T-cell (primary cell): ENCODE measurements at regions of chr4 and their contacts with region 1.

Region 1: DNA sequence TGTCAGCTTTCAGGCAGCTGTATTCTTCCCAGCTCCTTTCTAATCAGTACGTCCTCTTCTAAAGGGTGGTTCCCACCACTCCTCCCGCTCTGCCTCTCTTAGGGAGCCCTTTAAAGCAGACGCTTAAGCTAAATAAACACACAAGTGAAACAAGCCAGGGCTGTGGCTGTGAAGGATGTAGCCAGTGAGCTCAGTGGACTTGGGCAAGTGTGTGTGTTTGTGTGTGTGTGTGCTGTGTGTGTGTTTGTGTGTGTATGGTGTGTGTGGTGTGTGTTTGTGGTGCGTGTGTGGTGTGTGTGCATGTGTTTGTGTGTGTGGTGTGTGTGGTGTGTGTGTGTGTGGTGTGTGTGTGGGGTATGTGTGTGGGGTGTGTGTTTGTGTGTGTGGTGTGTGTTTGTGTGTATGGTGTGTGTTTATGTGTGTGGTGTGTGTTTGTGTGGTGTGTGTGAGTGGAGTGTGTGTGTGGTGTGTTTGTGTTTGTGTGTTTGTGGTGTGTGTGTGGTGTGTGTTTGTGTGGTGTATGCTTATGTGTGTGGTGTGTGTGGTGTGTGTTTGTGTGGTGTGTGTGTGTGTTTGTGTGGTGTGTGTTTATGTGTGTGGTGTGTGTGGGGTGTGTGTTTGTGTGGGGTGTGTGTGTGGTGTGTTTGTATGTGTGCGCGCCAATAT is 283.3 kb downstream of the PTTG2 start:
- DNase-seq: no peak
- ATAC-seq: peak in 3 of 4 experiments; percentile 31 to 48 (median 45)
- H3K4me3 ChIP-seq: no peak overlapping the region
- H3K4me3 Mint-ChIP-seq: peak overlapping the region in 1 of 3 donors; percentile 39
- H3K27ac ChIP-seq: no peak overlapping the region
- H3K27ac Mint-ChIP-seq: peak overlapping the region; percentile 49 to 76
- H3K4me1 ChIP-seq: peaks cover 9 to 11% of the 10 kb centered on the region in 2 experiments
- H3K4me1 Mint-ChIP-seq: peaks cover 11 to 21% (median 21%) of the 10 kb centered on the region in 3 donors
- H3K27me3 ChIP-seq: no peaks in the 10 kb centered on the region
- H3K27me3 Mint-ChIP-seq: no peaks in the 10 kb centered on the region

Region 2: DNA sequence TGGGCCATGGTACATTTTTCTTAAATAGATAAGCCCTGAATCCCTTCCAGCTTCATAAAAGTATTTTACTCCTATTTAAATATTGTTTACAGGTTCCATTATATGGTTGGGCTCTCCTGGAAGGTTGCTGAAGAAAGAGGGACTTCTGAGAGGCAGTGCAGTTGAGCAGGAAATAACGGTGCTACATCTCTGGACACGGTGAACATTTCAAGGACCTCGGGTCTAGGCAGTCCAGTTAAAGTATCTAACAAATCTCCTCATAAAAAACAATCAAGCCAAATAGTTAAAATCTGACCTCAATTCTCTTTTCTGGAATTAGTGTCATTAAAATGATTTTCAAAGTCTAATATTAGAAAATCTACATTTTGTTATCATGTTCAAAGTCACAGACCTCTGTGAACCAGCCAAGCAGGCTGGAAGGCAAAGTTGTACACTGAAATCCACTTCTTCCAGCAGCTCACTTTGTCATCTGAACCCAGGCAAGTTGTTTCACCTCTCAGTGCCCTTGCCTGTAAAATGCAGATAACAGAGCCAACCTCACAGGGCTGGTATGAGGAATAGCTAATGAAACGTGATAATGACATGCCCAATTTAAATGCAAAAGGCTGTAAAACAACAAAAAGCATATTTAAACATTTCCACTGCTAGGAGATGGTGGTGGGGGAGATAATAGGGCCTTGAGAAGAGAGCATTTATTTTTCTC is 153.5 kb after region 1 on chr4:
- CTCF ChIA-PET with region 1: no interaction called
- POLR2A ChIA-PET with region 1: no interaction called
- DNase-seq: no peak
- ATAC-seq: no peak
- H3K4me3 ChIP-seq: no peak overlapping the region
- H3K4me3 Mint-ChIP-seq: no peak overlapping the region
- H3K27ac ChIP-seq: no peak overlapping the region
- H3K27ac Mint-ChIP-seq: no peak overlapping the region
- H3K4me1 ChIP-seq: no peaks in the 10 kb centered on the region
- H3K4me1 Mint-ChIP-seq: peaks cover 0 to 9% (median 0%) of the 10 kb centered on the region in 3 donors
- H3K27me3 ChIP-seq: no peaks in the 10 kb centered on the region
- H3K27me3 Mint-ChIP-seq: no peaks in the 10 kb centered on the region

Region 3: DNA sequence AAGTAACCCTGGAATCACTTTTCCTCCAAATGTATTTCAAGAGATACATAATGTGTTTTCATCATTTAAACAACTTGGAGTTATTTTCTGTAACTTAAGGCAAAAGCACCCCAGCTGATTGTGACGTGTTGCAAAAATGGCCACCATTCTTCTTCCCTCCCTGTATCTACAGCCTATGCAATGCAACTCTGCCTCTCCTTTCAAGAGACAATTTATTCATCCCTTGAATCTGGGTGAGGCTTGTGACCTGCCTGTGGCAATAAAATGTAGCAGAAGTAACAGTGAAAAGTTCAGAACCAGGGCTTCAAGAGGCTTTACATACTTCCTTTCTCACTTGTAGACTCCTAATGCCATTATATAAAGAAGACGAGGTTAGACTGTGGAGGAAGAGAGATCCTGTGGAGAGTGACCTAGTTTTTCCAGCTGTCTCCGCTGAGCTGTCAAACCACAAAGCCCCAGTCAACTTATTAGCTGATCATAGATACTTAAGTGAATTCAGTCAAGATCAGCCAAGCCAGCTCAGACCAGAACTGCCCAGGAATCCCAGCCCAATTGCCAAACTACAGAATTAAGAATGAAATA is 339.5 kb after region 1 on chr4:
- CTCF ChIA-PET with region 1: no interaction called
- POLR2A ChIA-PET with region 1: interaction called in 1 of 2 experiments, 12 read pairs
- DNase-seq: peak in 2 of 35 experiments; percentile 9 to 27
- ATAC-seq: peak in 1 of 4 experiments; percentile 70
- H3K4me3 ChIP-seq: no peak overlapping the region
- H3K4me3 Mint-ChIP-seq: no peak overlapping the region
- H3K27ac ChIP-seq: peak overlapping the region; percentile 35
- H3K27ac Mint-ChIP-seq: peak overlapping the region; percentile 73 to 85
- H3K4me1 ChIP-seq: peaks cover 0 to 6% of the 10 kb centered on the region in 2 experiments
- H3K4me1 Mint-ChIP-seq: peaks cover 12 to 19% (median 17%) of the 10 kb centered on the region in 3 donors
- H3K27me3 ChIP-seq: no peaks in the 10 kb centered on the region
- H3K27me3 Mint-ChIP-seq: no peaks in the 10 kb centered on the region